ENCODE measurements at regions of chrX and their contacts with region 1.

Region 1: GRCh38 chrX:130079824-130080406 is 30.4 kb downstream of the ELF4 start:
- DNase-seq: peak; percentile 82
- H3K4me3 Mint-ChIP-seq: no peak overlapping the region
- H3K27ac Mint-ChIP-seq: no peak overlapping the region
- H3K4me1 Mint-ChIP-seq: no peaks in the 10 kb centered on the region
- H3K27me3 Mint-ChIP-seq: peaks cover 12% of the 10 kb centered on the region
- CTCF ChIP-seq: peak; percentile 72

Region 2: GRCh38 chrX:130060122-130061069 is 19.5 kb before region 1 on chrX:
- CTCF ChIA-PET with region 1: interaction called, 11 read pairs
- POLR2A ChIA-PET with region 1: no interaction called
- intact Hi-C with region 1: no loop called
- DNase-seq: peak; percentile 67
- H3K4me3 Mint-ChIP-seq: peak overlapping the region; percentile 65
- H3K27ac Mint-ChIP-seq: peak overlapping the region; percentile 85
- H3K4me1 Mint-ChIP-seq: no peaks in the 10 kb centered on the region
- H3K27me3 Mint-ChIP-seq: peaks cover 26% of the 10 kb centered on the region
- CTCF ChIP-seq: peak; percentile 78

Region 3: DNA sequence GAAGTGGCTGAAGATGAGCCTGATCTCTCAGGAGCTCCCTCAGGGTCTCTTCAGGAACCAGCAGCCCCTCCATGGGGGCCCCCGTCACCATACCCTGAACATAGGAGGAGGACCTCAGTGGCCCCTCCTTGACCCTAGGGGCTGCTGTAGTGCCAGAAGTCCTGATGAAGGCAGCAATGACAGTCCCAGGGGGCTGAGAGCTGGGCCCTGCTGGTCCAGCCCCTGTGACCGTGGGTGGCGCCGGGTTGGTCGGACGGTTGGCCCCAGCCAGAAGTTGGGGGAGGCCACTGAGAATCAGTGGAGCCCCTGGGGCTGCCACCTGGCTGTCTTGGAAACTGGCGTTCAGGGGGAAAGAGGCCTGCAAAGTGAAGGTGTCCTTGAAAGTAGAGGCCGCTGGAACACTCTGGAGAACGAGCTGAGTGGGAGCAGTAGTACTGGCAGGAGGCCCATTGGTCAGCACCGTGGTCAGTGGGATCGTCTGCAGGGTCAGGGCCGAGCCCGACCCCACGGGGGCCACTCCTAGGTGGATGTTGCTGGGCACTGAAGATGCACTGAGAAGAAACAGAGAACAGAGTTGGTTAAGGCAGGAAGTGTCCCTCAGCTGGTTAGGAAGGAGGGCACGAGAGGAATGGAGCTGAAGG is 12.8 kb before region 1 on chrX:
- CTCF ChIA-PET with region 1: interaction called, 14 read pairs
- POLR2A ChIA-PET with region 1: no interaction called
- intact Hi-C with region 1: no loop called
- DNase-seq: no peak
- H3K4me3 Mint-ChIP-seq: no peak overlapping the region
- H3K27ac Mint-ChIP-seq: no peak overlapping the region
- H3K4me1 Mint-ChIP-seq: no peaks in the 10 kb centered on the region
- H3K27me3 Mint-ChIP-seq: peaks cover 37% of the 10 kb centered on the region
- CTCF ChIP-seq: no peak

Region 4: GRCh38 chrX:130120746-130121504 is 41.0 kb after region 1 on chrX:
- CTCF ChIA-PET with region 1: interaction called, 13 read pairs
- POLR2A ChIA-PET with region 1: interaction called, 5 read pairs
- intact Hi-C with region 1: loop called (anchors 2 kb)
- DNase-seq: peak; percentile 77
- H3K4me3 Mint-ChIP-seq: peak overlapping the region; percentile 61
- H3K27ac Mint-ChIP-seq: peak overlapping the region; percentile 51
- H3K4me1 Mint-ChIP-seq: peaks cover 25% of the 10 kb centered on the region
- H3K27me3 Mint-ChIP-seq: peaks cover 12% of the 10 kb centered on the region
- CTCF ChIP-seq: peak; percentile 37

Region 5: DNA sequence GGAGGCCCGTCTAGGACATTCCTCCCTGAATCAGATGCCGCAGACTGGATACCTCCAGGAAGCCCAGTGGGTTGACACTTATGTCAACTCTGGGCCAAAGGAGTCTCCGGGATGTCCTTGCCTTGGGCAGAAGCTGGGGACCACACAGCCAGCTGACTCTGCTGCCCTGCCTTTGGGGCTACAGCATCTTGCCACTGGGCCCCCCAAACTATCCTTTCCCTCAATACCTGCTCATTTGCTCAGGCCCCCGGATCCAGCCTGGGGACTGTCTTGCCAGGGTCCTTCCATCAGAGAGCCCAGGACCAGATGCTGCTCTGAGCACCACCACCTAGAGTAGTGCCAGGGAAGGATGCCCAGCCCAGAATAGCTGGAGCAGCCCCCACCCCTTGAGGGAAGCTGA is 110.9 kb after region 1 on chrX:
- CTCF ChIA-PET with region 1: interaction called, 26 read pairs
- POLR2A ChIA-PET with region 1: interaction called, 4 read pairs
- intact Hi-C with region 1: loop called (anchors 1 kb)
- DNase-seq: no peak
- H3K4me3 Mint-ChIP-seq: no peak overlapping the region
- H3K27ac Mint-ChIP-seq: no peak overlapping the region
- H3K4me1 Mint-ChIP-seq: no peaks in the 10 kb centered on the region
- H3K27me3 Mint-ChIP-seq: peaks cover 37% of the 10 kb centered on the region
- CTCF ChIP-seq: no peak

Region 6: DNA sequence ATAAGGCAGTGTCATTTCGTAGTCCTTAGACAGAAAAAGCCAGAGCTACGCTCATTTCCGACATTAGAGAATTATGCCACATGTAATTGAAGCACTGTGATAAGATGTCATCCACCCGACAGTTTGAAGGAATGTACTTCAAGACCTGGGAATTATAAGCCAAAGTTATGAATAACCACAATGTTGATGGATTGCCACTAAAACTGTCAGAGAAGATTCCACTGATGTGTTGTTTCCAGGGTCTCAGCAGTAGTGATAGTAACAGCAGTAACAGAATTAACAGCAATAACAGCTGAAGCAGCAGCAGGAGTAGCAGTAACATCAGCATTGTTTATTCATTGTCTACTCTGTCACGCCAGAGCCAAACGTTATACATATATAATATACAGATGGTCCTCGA is 116.6 kb after region 1 on chrX:
- CTCF ChIA-PET with region 1: interaction called, 26 read pairs
- POLR2A ChIA-PET with region 1: interaction called, 4 read pairs
- intact Hi-C with region 1: loop called (anchors 1 kb)
- DNase-seq: no peak
- H3K4me3 Mint-ChIP-seq: no peak overlapping the region
- H3K27ac Mint-ChIP-seq: no peak overlapping the region
- H3K4me1 Mint-ChIP-seq: no peaks in the 10 kb centered on the region
- H3K27me3 Mint-ChIP-seq: peaks cover 13% of the 10 kb centered on the region
- CTCF ChIP-seq: no peak

Measured in MCF 10A (cell line).